IMR-90 (cell line): ENCODE measurements at regions of chr4 and their contacts with region 1.

Region 1: GRCh38 chr4:151620066-151620465 is 140.7 kb downstream of the GATB start:
- DNase-seq: no peak
- ATAC-seq: no peak
- H3K4me3 ChIP-seq: no peak overlapping the region
- H3K27ac ChIP-seq: no peak overlapping the region
- H3K4me1 ChIP-seq: no peaks in the 10 kb centered on the region
- H3K27me3 ChIP-seq: peaks cover 27% of the 10 kb centered on the region
- CTCF ChIP-seq: no peak
- POLR2A ChIP-seq: no peak
- RAD21 ChIP-seq: no peak

Region 2: GRCh38 chr4:151637596-151637995 is 17.5 kb after region 1 on chr4:
- CTCF ChIA-PET with region 1: no interaction called
- POLR2A ChIA-PET with region 1: no interaction called
- dilution Hi-C with region 1: no loop called
- in situ Hi-C with region 1: no loop called
- intact Hi-C with region 1: loop called (anchors 2 kb)
- DNase-seq: no peak
- ATAC-seq: no peak
- H3K4me3 ChIP-seq: no peak overlapping the region
- H3K27ac ChIP-seq: no peak overlapping the region
- H3K4me1 ChIP-seq: no peaks in the 10 kb centered on the region
- H3K27me3 ChIP-seq: peaks cover 6% of the 10 kb centered on the region
- CTCF ChIP-seq: no peak
- POLR2A ChIP-seq: no peak
- RAD21 ChIP-seq: no peak